PC-3 (cell line): ENCODE measurements at regions of chr1 and their contacts with region 1.

Region 1: DNA sequence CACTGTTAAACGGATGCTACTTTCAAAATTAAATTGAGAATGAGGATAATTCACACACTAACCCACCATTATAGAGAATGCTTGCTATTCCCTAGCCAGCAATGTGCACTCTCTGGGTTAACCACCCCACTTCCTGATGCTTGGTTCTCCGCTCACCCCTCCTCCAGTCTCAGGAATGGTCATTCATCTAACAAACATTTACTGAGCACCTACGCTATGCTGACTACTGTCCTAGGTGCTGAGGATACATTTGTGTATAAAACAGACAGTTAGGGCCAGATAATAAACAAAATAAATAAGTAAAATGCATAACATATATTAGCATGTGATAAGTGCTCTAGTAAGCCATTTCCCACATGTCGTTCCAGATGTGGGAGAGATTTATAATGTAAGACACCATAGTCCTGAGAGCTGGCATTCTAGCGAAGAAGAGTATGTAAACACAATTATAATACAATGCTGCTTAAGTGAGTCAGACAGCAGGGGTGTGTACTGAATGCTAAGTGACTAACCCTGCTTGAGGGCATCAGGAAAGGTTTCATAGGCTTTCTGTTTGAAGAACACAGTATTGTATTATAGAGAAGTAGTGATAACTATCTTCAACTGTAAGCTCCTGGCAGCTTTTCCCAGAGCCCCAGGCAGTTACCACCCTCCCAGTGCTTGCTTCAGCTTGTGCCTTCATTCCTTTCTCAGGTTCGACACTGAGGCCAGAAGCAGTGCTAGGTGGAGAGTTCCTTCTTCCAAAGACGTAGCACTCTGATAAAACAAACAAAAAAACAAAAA is 126.6 kb upstream of the CACHD1 start:
- DNase-seq: peak; percentile 99
- ATAC-seq: peak; percentile 89
- H3K4me3 ChIP-seq: peak overlapping the region; percentile 31
- H3K27ac ChIP-seq: peak overlapping the region; percentile 97
- H3K4me1 ChIP-seq: peaks cover 36% of the 10 kb centered on the region
- H3K27me3 ChIP-seq: no peaks in the 10 kb centered on the region
- CTCF ChIP-seq: no peak

Region 2: DNA sequence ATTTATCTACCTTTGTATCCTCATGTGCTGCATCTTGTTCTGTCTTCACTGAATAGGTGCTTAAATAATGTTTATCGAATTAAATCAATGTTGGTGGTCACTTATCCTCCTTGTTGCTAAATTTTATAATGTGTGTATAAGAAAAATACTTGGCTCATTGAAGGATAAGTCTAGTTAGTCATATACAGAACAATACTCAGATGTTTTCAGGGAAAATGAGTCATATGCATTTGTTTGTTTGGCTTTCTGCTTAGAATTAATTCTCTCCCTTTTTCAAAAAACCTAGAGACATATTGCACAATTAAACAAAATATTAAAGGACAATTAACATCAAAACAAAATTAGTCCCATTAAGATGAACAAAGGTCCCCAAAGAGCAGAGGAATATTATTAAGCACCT is 50.9 kb before region 1 on chr1:
- CTCF ChIA-PET with region 1: interaction called, 3 read pairs
- POLR2A ChIA-PET with region 1: no interaction called
- intact Hi-C with region 1: loop called (anchors 1 kb)
- DNase-seq: peak; percentile 72
- ATAC-seq: peak; percentile 70
- H3K4me3 ChIP-seq: no peak overlapping the region
- H3K27ac ChIP-seq: peak overlapping the region; percentile 24
- H3K4me1 ChIP-seq: peaks cover 32% of the 10 kb centered on the region
- H3K27me3 ChIP-seq: no peaks in the 10 kb centered on the region
- CTCF ChIP-seq: no peak

Region 3: DNA sequence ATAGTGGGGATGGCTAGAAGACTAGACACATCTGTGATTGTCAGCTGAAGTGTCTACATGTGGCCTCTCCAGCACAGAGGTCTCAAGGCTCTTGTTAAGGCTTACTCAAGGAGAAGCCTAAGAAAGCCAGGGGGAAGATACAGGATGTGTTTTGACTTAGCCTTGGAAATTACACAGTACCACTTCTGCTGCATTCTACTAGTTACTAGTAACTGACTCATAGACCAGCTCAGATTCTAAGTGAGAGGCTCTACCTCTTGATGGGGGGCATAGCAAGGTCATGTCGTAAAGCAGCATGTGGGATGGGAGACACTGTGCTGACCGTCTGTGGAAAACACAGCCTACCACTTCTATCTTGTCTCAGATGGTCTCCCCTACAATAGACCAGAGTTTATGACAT is 40.3 kb before region 1 on chr1:
- CTCF ChIA-PET with region 1: no interaction called
- POLR2A ChIA-PET with region 1: no interaction called
- intact Hi-C with region 1: no loop called
- DNase-seq: peak; percentile 19
- ATAC-seq: peak; percentile 43; the same call in 1 of the 2 replicates
- H3K4me3 ChIP-seq: no peak overlapping the region
- H3K27ac ChIP-seq: no peak overlapping the region
- H3K4me1 ChIP-seq: no peaks in the 10 kb centered on the region
- H3K27me3 ChIP-seq: no peaks in the 10 kb centered on the region
- CTCF ChIP-seq: no peak

Region 4: GRCh38 chr1:64484651-64485050 is 141.4 kb after region 1 on chr1:
- CTCF ChIA-PET with region 1: no interaction called
- POLR2A ChIA-PET with region 1: no interaction called
- intact Hi-C with region 1: loop called (anchors 5 kb)
- DNase-seq: peak; percentile 96
- ATAC-seq: peak; percentile 87
- H3K4me3 ChIP-seq: peak overlapping the region; percentile 29; the same call in 1 of the 2 replicates
- H3K27ac ChIP-seq: peak overlapping the region; percentile 43
- H3K4me1 ChIP-seq: peaks cover 15% of the 10 kb centered on the region
- H3K27me3 ChIP-seq: no peaks in the 10 kb centered on the region
- CTCF ChIP-seq: no peak

Region 5: GRCh38 chr1:64675718-64676345 is 332.5 kb after region 1 on chr1:
- CTCF ChIA-PET with region 1: no interaction called
- POLR2A ChIA-PET with region 1: no interaction called
- intact Hi-C with region 1: loop called (anchors 5 kb)
- DNase-seq: peak; percentile 38
- ATAC-seq: no peak
- H3K4me3 ChIP-seq: no peak overlapping the region
- H3K27ac ChIP-seq: no peak overlapping the region
- H3K4me1 ChIP-seq: no peaks in the 10 kb centered on the region
- H3K27me3 ChIP-seq: no peaks in the 10 kb centered on the region
- CTCF ChIP-seq: peak; percentile 49